B cell (primary cell): ENCODE measurements at regions of chr17 and their contacts with region 1.

Region 1: DNA sequence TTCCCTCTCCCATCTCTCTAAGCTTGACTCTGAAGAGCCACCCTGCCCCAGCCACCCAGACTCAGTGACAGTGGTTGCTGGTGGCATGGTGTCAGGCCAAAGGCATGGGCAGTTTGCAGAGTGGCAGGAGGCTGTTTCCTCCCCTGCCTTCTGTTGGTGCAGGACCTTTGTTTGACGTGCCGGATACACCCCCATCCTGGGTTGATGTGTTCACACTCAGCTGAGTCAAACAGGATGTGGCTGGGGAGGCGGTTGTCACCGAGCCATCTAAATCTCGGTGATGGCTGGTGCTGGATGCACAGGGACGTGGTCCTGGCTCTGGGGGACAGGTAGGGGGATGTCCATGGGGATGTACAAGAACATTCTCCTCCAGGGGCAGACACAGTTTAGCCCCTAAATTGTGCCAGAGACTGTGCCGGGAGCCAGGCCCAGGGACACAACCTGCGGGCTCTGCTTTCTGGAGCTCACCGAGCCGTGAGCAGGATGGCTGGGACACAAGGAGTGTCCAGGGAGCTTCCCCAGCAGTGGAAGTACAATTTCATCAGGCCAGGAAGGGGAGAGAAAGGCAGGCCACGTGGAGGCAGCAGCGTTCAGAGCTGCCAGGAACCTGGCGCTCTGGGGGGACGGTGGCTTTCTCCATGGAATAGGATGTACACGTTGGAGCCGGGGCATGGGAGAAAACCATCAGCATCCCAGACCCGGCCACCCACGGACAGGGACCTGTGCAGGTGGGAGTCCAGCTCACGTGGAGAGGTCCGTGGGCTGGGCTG is 264.2 kb downstream of the SEC14L1 start:
- DNase-seq: peak; percentile 83
- ATAC-seq: peak; percentile 73
- H3K4me3 ChIP-seq: peak overlapping the region; percentile 57 to 72 (median 63)
- H3K4me3 Mint-ChIP-seq: peak overlapping the region; percentile 93
- H3K27ac ChIP-seq: peak overlapping the region; percentile 84 to 90
- H3K27ac Mint-ChIP-seq: peak overlapping the region; percentile 95
- H3K4me1 ChIP-seq: peaks cover 86 to 100% of the 10 kb centered on the region in 2 donors
- H3K4me1 Mint-ChIP-seq: peaks cover 88% of the 10 kb centered on the region
- H3K27me3 ChIP-seq: no peaks in the 10 kb centered on the region
- H3K27me3 Mint-ChIP-seq: no peaks in the 10 kb centered on the region
- CTCF ChIP-seq: no peak

Region 2: DNA sequence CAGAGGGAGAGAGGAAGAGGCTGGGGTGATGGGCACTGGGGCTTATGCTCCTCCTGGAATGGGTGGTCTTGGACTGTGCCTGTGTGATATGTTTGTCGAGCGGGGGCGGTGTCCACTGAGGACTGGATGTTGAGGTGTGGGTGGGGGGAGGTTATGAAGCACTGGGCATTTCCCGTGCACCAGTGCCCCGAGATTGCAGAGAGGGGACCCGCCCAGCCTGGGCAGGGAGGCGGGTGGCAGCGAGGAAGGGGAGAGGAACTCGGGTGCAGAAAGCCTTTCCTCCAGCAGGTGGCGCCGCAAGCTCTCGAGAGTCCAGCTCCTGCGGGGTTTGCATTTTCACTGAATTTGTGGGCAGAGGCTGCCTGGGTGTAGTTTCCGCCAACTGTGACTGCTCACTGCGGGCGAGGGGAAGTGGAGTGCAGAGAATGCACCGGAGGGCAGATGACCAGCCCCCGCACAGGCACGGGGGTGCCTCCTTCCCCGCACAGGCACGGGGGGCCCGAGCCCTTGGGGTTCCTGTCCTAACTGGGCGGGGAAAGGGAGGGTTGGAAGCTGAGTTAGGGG is 73.6 kb before region 1 on chr17:
- CTCF ChIA-PET with region 1: interaction called, 56 read pairs
- POLR2A ChIA-PET with region 1: interaction called, 12 read pairs
- intact Hi-C with region 1: loop called (anchors 2 kb)
- DNase-seq: peak; percentile 94
- ATAC-seq: peak; percentile 89
- H3K4me3 ChIP-seq: peak overlapping the region in 4 of 5 experiments; percentile 21 to 65 (median 36)
- H3K4me3 Mint-ChIP-seq: peak overlapping the region; percentile 82
- H3K27ac ChIP-seq: peak overlapping the region; percentile 67 to 77
- H3K27ac Mint-ChIP-seq: peak overlapping the region; percentile 85
- H3K4me1 ChIP-seq: peaks cover 41 to 66% of the 10 kb centered on the region in 2 donors
- H3K4me1 Mint-ChIP-seq: peaks cover 53% of the 10 kb centered on the region
- H3K27me3 ChIP-seq: no peaks in the 10 kb centered on the region
- H3K27me3 Mint-ChIP-seq: no peaks in the 10 kb centered on the region
- CTCF ChIP-seq: peak; percentile 93

Region 3: DNA sequence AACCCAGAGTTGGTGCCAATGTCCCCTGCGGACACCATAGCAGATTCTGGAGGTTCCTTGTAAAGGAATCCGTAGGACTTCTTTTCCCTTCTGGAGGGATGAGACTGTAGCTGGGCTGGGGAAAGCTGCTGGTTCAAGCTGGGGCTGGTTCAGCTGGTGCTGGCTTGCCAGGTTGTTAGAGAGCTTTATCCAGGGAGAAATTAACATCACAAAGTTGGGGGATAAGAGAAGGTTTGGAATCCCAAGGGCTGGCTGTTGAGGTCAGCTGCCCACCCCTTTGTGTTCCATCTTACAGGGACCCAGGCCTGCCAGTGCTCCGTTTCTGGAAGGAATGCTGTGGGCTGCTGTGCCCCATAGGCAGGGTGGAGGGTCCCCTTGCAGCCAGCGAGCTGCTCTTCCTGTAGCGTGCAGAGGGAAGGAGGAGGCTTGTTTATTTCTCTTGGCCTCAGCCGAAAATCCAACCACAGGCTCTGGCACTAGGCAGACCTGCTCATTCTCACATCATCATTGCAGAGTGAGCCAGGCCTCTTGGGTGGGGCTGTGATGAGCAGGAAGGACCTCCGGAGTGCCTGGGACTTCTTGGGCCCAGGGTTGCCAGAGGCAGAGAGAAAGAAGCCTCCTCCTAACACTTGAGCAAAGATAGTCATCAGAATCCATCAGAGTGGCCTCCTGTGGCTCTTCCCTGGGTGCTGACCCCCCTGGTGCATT is 13.2 kb before region 1 on chr17:
- CTCF ChIA-PET with region 1: interaction called, 37 read pairs
- POLR2A ChIA-PET with region 1: interaction called, 11 read pairs
- intact Hi-C with region 1: no loop called
- DNase-seq: no peak
- ATAC-seq: no peak
- H3K4me3 ChIP-seq: no peak overlapping the region
- H3K4me3 Mint-ChIP-seq: no peak overlapping the region
- H3K27ac ChIP-seq: no peak overlapping the region
- H3K27ac Mint-ChIP-seq: peak overlapping the region; percentile 37
- H3K4me1 ChIP-seq: peaks cover 27 to 46% of the 10 kb centered on the region in 2 donors
- H3K4me1 Mint-ChIP-seq: peaks cover 36% of the 10 kb centered on the region
- H3K27me3 ChIP-seq: no peaks in the 10 kb centered on the region
- H3K27me3 Mint-ChIP-seq: no peaks in the 10 kb centered on the region
- CTCF ChIP-seq: no peak

Region 4: DNA sequence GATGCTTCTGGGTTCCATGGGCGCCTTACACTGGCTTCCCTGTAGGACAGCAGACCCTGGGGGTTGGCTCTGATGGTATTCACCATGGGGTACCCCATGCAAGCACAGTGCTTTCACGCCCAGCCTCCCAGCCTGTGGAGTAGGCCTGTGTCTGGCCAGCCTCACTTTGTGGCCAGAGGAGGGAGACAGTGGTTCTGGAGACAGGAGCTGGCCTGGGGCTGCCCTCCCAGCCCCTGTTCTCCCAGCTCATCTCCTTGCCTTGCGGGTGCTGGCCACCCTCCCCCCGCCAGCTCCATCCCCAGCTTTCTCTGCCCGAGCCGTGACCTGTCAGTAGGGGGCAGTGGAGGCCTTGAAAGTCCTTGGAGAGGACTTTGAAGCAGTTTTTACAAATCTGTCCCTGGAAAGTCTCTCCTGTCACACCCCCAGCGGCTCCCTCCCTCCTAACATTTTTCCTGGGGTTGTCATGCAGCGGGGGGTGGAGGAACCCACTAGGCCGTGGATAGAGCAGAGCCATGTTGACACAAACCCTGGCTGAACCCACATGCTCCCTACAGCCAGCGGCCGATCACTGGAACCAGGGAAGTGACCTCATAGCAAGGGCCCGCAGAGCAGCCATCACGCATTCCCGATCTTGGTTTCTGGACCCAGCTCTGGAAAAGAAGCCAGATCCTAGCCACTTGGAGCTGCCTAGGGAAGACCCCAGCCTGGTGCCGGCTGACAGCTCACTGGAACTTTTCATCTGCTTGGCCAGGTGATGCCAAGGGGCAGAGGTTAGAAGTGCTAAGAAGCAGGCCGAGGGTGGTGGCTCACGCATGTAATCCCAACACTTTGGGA is 25.1 kb after region 1 on chr17:
- CTCF ChIA-PET with region 1: interaction called, 699 read pairs
- POLR2A ChIA-PET with region 1: interaction called, 47 read pairs
- intact Hi-C with region 1: loop called (anchors 1 kb)
- DNase-seq: peak; percentile 82
- ATAC-seq: peak; percentile 32
- H3K4me3 ChIP-seq: no peak overlapping the region
- H3K4me3 Mint-ChIP-seq: peak overlapping the region; percentile 61
- H3K27ac ChIP-seq: peak overlapping the region in 1 of 2 donors; percentile 43
- H3K27ac Mint-ChIP-seq: peak overlapping the region; percentile 81
- H3K4me1 ChIP-seq: peaks cover 100% of the 10 kb centered on the region in 2 donors
- H3K4me1 Mint-ChIP-seq: peaks cover 86% of the 10 kb centered on the region
- H3K27me3 ChIP-seq: no peaks in the 10 kb centered on the region
- H3K27me3 Mint-ChIP-seq: no peaks in the 10 kb centered on the region
- CTCF ChIP-seq: peak; percentile 87

Region 5: GRCh38 chr17:77451245-77451893 is 46.4 kb after region 1 on chr17:
- CTCF ChIA-PET with region 1: interaction called, 699 read pairs
- POLR2A ChIA-PET with region 1: interaction called, 51 read pairs
- intact Hi-C with region 1: no loop called
- DNase-seq: peak; percentile 70
- ATAC-seq: peak; percentile 59
- H3K4me3 ChIP-seq: peak overlapping the region; percentile 91 to 96 (median 92)
- H3K4me3 Mint-ChIP-seq: peak overlapping the region; percentile 93
- H3K27ac ChIP-seq: peak overlapping the region; percentile 66 to 96
- H3K27ac Mint-ChIP-seq: peak overlapping the region; percentile 96
- H3K4me1 ChIP-seq: peaks cover 67 to 86% of the 10 kb centered on the region in 2 donors
- H3K4me1 Mint-ChIP-seq: peaks cover 69% of the 10 kb centered on the region
- H3K27me3 ChIP-seq: no peaks in the 10 kb centered on the region
- H3K27me3 Mint-ChIP-seq: no peaks in the 10 kb centered on the region
- CTCF ChIP-seq: no peak

Region 6: GRCh38 chr17:77471984-77472461 is 67.0 kb after region 1 on chr17:
- CTCF ChIA-PET with region 1: interaction called, 22 read pairs
- POLR2A ChIA-PET with region 1: interaction called, 5 read pairs
- intact Hi-C with region 1: no loop called
- DNase-seq: no peak
- ATAC-seq: no peak
- H3K4me3 ChIP-seq: peak overlapping the region in 4 of 5 experiments; percentile 2 to 51 (median 19)
- H3K4me3 Mint-ChIP-seq: peak overlapping the region; percentile 73
- H3K27ac ChIP-seq: peak overlapping the region; percentile 49 to 89
- H3K27ac Mint-ChIP-seq: peak overlapping the region; percentile 75
- H3K4me1 ChIP-seq: peaks cover 89 to 97% of the 10 kb centered on the region in 2 donors
- H3K4me1 Mint-ChIP-seq: peaks cover 93% of the 10 kb centered on the region
- H3K27me3 ChIP-seq: no peaks in the 10 kb centered on the region
- H3K27me3 Mint-ChIP-seq: no peaks in the 10 kb centered on the region
- CTCF ChIP-seq: no peak

Region 7: GRCh38 chr17:77957857-77958715 is 553.1 kb after region 1 on chr17 and contains the start of gene TNRC6C:
- CTCF ChIA-PET with region 1: interaction called, 3 read pairs
- POLR2A ChIA-PET with region 1: interaction called, 3 read pairs
- intact Hi-C with region 1: loop called (anchors 10 kb)
- DNase-seq: peak; percentile 100
- ATAC-seq: peak; percentile 81
- H3K4me3 ChIP-seq: peak within 1 kb of the TSS; percentile 73 to 82 (median 77)
- H3K4me3 Mint-ChIP-seq: peak within 1 kb of the TSS; percentile 95
- H3K27ac ChIP-seq: peak within 1 kb of the TSS; percentile 74 to 85
- H3K27ac Mint-ChIP-seq: peak within 1 kb of the TSS; percentile 97
- H3K4me1 ChIP-seq: peaks cover 27 to 28% of the 10 kb centered on the region in 2 donors
- H3K4me1 Mint-ChIP-seq: peaks cover 44% of the 10 kb centered on the region
- H3K27me3 ChIP-seq: peaks cover 0 to 22% (median 11%) of the 10 kb centered on the region in 4 experiments
- H3K27me3 Mint-ChIP-seq: peaks cover 21% of the 10 kb centered on the region
- CTCF ChIP-seq: no peak
- total RNA-seq, gene TNRC6C: 63.8 and 66.8 TPM in 2 replicates